ENCODE measurements at regions of chr6 and their contacts with region 1.

Region 1: DNA sequence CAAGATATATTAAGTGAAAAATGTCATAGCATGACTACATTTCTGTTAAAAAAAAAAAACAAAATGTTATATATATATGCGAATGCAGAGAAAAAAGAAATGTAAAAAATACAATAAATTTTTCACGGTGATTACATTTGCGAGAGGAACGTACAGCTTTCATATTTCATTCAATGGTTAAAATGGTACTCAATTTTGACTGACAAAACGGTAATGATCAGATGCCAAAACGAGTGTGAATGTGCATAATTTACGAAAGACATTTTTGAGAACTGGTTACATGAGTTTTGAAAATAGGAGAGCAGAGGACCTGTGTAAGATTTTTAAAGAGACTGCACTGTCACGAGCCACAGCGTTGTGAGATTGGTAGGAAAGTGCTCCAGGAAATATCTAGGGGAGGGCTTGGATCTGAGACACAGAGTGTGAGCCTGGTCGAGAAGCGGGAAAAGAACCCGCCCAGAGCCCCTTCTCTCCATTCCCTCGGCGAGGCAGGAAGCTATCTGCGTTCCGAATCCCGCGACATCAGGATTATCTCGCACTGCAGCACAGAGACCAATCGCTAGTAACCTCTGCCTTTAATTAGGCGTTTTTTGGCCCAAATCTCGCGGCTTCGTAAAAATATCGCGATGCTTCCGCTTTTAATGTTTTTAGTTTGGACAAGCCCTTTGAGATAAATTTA is 28.5 kb downstream of the TRIM27 start:
- DNase-seq: peak; percentile 94

Region 2: GRCh38 chr6:27825025-27825793 is 1070.1 kb before region 1 on chr6:
- intact Hi-C with region 1: no loop called
- DNase-seq: no peak

Region 3: GRCh38 chr6:28523241-28523622 is 372.0 kb before region 1 on chr6:
- intact Hi-C with region 1: no loop called
- DNase-seq: no peak

Region 4: DNA sequence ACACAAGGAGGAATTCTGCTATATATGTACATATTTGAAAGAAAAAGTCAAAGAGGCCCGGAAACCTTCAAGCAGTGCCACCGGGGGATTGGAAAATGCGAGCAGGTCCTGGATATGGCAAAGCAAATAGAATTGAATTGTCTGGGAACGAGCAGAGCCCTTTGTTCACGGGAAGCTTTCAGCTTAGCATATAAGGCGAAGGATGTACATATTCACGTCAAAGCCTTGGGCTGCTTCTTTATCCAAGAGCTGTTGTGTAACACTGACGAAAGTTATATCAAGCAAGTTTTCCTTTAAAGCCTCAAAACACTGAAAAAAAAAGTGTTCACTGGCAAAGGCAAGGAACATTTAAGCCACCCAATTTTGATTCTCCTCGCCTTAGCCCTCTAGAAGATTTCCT is 198.6 kb before region 1 on chr6:
- intact Hi-C with region 1: no loop called
- DNase-seq: no peak

Region 5: DNA sequence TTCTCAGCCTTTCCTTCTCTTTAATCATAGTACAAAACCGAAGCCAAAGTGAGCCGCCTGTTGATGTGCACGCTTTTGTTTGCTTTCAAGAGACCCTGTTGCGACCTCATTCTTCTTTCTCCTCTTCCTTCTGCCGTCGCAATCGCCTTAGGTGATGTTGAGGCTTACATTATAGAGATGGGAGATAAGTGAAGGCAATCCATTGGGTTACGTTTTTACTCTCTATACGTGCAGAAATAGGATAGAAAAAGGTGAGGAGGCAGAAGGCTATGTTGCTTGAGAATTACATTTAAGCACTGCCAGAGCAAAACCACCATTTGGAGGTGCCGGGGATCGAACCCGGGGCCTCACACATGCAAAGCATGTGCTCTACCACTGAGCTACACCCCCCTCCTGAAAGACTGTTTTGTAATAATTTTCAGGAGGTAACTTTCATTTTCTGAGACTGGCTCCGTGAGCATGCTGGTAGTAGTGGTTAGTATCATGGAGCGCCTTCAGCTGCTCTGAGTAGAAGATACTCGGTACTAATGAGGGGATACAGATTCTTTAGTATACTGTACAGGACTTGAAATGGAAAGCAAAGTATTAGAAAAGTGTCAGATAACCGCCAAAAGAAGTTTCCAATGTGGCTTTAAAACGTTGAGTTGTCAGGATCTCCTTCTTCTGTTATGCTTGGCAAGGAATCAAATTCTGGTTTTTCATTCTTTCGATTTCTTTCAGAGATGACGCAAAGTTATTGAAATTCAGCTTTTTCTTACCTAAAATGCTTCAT is 137.0 kb before region 1 on chr6:
- intact Hi-C with region 1: no loop called
- DNase-seq: no peak

Region 6: GRCh38 chr6:28838634-28839442 is 56.4 kb before region 1 on chr6:
- intact Hi-C with region 1: loop called (anchors 2 kb)
- DNase-seq: peak; percentile 89

Region 7: DNA sequence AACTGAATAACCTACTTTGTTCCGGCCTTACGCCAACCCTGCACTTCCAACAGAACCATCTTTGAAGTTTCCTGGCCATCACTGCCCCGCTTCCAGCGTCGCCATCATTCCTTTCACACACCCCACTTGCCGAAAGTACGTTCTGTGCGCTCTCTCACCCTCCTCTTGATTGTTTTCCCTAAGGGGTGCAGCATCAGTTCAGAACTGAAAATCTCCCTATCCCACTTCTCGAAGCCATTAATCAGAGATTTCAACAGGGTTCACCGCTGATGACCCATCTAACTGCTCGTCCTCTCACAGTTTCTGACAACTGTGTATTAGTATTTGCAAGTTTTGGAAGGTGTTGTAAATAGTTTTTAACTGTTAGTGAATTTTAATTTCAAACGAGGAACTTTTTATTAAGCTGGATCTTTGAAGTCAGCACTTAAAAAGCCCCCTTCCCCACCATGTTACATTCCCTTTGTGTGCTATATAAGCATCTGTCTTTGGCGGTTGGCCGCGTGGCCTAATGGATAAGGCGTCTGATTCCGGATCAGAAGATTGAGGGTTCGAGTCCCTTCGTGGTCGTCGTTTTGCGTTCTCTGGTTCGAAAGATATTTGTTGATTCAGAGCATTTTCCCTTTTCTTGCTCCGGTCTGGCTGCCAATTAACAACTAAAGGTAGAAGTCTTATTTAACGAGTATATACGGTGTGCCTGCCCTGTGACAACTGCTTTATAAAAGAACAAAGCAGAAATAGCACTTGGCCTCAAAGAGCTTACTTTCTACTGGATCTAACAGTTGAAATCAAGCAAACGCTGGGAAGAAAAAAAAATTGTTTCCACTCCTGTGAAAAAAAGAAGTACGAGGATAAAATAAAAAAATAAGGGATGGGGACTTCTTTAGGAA is 14.1 kb before region 1 on chr6:
- intact Hi-C with region 1: loop called (anchors 1 kb)
- DNase-seq: no peak

Region 8: DNA sequence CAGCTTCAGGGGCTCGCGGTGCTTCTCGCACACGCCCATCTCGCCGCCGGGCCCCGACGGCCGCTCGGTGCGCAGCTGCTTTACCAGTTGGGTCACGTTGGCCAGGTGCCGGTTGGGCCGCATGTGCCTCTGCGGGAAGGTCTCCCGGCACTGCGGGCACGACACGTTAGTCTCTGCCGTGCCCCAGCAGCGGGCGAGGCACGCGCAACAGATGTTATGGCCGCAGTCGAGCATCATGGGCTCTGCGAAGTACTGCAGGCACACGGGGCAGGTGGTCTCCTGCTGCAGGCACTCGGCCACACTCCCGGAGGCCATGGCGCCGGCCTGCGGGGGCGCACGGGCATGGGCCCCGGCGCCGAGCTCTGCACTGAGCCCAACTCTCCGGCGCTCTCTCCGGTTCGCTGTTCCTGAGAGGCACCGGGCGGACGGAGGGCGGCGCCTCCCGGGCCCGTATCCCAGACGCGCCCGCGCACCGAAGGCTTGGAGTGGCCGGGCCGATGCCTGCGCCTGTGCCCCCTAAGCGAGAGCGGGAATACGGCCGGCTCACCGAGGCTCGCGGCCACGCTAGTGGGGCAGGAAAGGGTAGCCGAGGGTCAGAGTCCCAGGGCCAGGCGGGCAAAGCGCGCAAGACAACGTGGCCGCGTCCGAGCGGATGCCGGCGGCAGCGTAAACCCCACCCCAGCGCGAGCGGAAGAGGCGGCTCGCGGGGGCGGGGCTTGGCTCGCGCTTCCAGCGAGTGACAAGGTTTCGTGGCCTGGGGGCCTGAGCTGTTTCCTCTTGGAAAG is 28.2 kb after region 1 on chr6 and contains the start of gene TRIM27:
- intact Hi-C with region 1: loop called (anchors 1 kb)
- DNase-seq: peak; percentile 96
- total RNA-seq, gene TRIM27: 21.0 TPM

Region 9: GRCh38 chr6:28940858-28941680 is 45.8 kb after region 1 on chr6:
- intact Hi-C with region 1: loop called (anchors 1 kb)
- DNase-seq: peak; percentile 78

Region 10: DNA sequence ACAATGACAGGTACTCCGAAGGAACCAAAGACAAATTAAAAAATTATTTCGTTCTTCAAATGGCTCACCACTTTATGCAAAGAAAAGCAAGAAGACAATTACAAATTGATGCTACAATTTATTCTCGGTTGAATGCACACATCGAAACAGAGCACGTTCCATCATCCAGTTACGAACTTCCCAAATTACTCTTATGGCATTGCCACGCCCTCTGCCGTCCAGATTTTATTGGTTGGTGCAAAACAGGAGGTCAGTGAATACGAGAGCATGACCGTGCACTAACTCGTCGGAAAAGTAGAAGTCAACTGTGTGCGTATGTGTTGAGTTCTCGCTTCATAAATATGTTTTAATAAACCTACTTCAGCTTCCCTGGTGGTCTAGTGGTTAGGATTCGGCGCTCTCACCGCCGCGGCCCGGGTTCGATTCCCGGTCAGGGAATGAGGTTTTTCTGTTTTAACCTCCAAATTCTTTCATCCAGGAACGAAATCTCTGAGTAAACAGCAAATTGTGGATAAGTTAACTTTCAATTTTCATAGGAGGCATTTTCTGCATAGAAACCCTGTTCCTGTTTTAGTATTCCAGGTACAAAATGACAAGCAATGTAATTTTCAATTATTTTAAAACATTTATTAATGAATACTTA is 86.7 kb after region 1 on chr6:
- intact Hi-C with region 1: loop called (anchors 10 kb)
- DNase-seq: peak; percentile 88

Measured in cardiac septum (tissue), 1 donor.